IMR-90 (cell line): ENCODE measurements at regions of chr12 and their contacts with region 1.

Region 1: GRCh38 chr12:20376984-20377383 is 8.6 kb downstream of the PDE3A start:
- DNase-seq: peak; percentile 30
- ATAC-seq: 0 out of 2 replicates have a peak, but pooled peaks have one; percentile 11
- H3K4me3 ChIP-seq: no peak overlapping the region
- H3K27ac ChIP-seq: no peak overlapping the region
- H3K4me1 ChIP-seq: no peaks in the 10 kb centered on the region
- H3K27me3 ChIP-seq: no peaks in the 10 kb centered on the region
- CTCF ChIP-seq: peak; percentile 52
- POLR2A ChIP-seq: no peak
- RAD21 ChIP-seq: peak; percentile 50

Region 2: DNA sequence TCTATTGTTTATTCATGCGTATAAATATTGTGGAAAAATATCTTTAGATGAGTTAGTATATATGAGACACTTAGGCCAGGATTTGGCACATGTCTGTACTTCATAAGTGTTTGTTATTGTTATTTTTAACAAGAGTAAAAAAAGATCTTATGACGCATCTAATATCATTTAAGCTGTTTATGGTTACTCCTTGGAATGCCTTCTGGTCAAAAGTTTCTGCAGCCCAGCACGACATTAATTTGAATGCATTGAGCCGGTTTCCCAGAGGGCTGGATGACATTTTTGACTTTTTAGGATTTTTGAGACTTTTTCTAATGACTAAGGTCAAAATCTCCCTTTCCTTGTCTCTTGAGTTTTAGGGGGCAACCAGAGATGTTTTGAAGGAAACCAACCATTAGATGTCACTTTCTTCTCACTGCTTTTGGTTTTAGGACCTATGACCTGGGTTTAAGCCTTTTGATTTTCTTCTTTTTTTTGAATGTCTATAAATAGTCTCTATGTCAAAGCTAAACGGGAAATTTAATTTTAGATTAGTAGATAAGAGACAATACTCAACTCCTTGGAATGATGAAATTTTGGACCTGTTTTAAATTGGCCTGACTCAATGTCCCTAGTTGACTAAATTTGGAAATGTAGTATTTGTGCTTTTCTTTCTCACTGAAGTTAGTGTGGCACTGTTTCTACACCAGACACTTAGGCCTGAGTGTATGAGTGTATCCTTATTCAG is 722.2 kb before region 1 on chr12:
- CTCF ChIA-PET with region 1: no interaction called
- POLR2A ChIA-PET with region 1: no interaction called
- dilution Hi-C with region 1: no loop called
- in situ Hi-C with region 1: no loop called
- intact Hi-C with region 1: loop called (anchors 5 kb)
- DNase-seq: peak; percentile 84
- ATAC-seq: peak; percentile 71
- H3K4me3 ChIP-seq: no peak overlapping the region
- H3K27ac ChIP-seq: peak overlapping the region; percentile 96; the same call in 1 of the 2 replicates
- H3K4me1 ChIP-seq: peaks cover 23% of the 10 kb centered on the region
- H3K27me3 ChIP-seq: no peaks in the 10 kb centered on the region
- CTCF ChIP-seq: 0 out of 2 replicates have a peak, but pooled peaks have one; percentile 12
- POLR2A ChIP-seq: no peak
- RAD21 ChIP-seq: no peak